ENCODE measurements at regions of chr11 and their contacts with region 1.

Region 1: DNA sequence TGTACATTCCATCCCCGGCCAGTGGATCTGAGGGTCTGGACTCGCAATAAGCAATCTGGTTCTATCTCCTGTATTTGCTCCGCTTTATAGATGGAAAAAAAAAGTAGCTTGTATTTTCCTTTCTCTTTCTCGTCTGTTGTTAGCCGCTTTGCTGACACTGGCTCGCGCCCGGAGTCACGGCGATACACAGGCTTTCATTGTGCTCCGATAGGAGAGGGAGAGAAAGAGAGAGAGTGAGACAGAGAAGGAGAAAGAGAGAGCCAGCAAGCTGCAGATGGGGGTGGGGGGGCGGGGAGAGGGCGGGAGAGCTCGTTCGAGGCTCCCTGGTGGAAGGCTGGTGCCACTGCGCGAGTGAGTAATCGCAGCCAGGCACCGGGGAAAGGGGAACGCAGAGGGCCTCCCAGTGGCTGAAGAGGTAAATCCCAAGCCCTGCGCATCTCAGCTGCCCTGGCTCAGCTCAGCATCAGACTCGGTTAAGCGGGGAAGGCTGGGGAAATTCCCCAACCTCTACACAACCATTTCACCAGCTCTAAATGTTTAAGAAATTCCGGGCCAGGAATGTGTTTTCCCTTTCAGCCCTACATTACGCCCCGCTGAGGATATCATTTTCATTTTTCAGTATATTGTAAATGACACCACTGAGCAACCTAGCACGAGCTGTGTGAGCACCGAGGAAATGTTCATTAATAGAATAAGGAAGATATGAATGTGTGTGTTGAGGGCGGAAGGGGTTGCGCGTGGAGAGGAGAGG is at the start of gene MAML2:
- DNase-seq: peak; percentile 93
- H3K4me3 Mint-ChIP-seq: peak within 1 kb of the TSS; percentile 97
- H3K27ac Mint-ChIP-seq: peak within 1 kb of the TSS; percentile 88
- H3K4me1 Mint-ChIP-seq: peaks cover 28% of the 10 kb centered on the region
- H3K27me3 Mint-ChIP-seq: no peaks in the 10 kb centered on the region
- total RNA-seq, gene MAML2: 19.2 to 19.3 TPM

Region 2: GRCh38 chr11:95802806-95803205 is 540.3 kb before region 1 on chr11:
- CTCF ChIA-PET with region 1: no interaction called
- POLR2A ChIA-PET with region 1: no interaction called
- DNase-seq: no peak
- H3K4me3 Mint-ChIP-seq: no peak overlapping the region
- H3K27ac Mint-ChIP-seq: no peak overlapping the region
- H3K4me1 Mint-ChIP-seq: peaks cover 5% of the 10 kb centered on the region
- H3K27me3 Mint-ChIP-seq: no peaks in the 10 kb centered on the region

Region 3: GRCh38 chr11:95835768-95836488 is 507.2 kb before region 1 on chr11:
- CTCF ChIA-PET with region 1: interaction called, 35 read pairs
- POLR2A ChIA-PET with region 1: no interaction called
- DNase-seq: peak; percentile 57
- H3K4me3 Mint-ChIP-seq: no peak overlapping the region
- H3K27ac Mint-ChIP-seq: no peak overlapping the region
- H3K4me1 Mint-ChIP-seq: no peaks in the 10 kb centered on the region
- H3K27me3 Mint-ChIP-seq: no peaks in the 10 kb centered on the region

Region 4: DNA sequence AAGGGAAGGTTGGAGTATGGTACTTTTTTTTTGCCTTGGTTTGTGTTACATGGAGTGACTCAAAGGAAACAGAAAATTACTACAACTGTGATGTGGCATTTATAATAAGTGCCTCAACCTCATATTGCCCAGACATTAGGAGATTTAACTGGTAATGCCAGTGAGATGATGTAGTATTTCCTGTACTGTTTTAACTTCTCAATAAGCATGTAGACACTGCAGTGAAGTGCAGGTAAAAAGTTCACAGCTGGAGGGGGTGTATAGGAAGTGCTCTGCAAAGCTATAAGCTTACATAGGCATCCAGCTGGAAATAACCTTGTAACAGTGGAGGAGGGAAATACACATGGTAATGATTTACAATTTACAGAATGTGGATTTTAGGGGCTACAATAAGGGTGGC is 281.0 kb before region 1 on chr11:
- CTCF ChIA-PET with region 1: interaction called, 138 read pairs
- POLR2A ChIA-PET with region 1: interaction called, 3 read pairs
- DNase-seq: peak; percentile 22
- H3K4me3 Mint-ChIP-seq: no peak overlapping the region
- H3K27ac Mint-ChIP-seq: peak overlapping the region; percentile 19
- H3K4me1 Mint-ChIP-seq: peaks cover 30% of the 10 kb centered on the region
- H3K27me3 Mint-ChIP-seq: no peaks in the 10 kb centered on the region

Region 5: DNA sequence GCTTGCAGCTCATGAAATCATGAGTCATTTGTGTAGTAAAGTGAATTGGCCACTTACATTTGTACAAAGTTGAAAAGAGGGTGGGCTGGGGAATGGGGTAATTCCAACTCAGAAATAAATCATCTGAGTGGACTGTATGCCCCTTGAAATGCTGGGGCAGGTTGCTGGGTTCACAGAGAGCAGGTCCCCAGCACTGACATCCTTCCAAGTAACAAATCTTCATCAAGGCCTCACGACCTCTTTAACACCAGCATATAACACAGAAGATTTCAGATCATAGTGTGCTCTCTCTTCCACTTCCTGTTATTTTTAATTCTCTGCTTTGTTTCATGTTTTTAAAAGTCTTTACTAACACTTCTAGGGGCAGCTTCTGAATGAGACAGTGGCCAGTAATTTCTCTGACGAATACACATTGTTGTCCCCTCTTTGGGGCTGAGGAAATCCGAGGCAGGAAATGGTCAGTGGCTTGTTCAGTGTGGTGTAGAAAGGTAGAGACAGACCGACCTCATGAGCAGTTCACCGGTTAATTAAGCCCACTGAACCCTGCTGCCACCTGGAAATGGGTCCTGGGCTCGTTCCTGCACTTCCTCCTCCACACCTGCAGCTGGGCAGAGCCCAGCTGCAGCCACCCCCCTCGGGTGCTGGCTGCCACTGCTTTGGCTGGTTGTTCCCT is 127.9 kb before region 1 on chr11:
- CTCF ChIA-PET with region 1: interaction called, 8 read pairs
- POLR2A ChIA-PET with region 1: interaction called, 12 read pairs
- DNase-seq: peak; percentile 48
- H3K4me3 Mint-ChIP-seq: peak overlapping the region; percentile 12
- H3K27ac Mint-ChIP-seq: peak overlapping the region; percentile 89
- H3K4me1 Mint-ChIP-seq: peaks cover 65% of the 10 kb centered on the region
- H3K27me3 Mint-ChIP-seq: no peaks in the 10 kb centered on the region

Region 6: DNA sequence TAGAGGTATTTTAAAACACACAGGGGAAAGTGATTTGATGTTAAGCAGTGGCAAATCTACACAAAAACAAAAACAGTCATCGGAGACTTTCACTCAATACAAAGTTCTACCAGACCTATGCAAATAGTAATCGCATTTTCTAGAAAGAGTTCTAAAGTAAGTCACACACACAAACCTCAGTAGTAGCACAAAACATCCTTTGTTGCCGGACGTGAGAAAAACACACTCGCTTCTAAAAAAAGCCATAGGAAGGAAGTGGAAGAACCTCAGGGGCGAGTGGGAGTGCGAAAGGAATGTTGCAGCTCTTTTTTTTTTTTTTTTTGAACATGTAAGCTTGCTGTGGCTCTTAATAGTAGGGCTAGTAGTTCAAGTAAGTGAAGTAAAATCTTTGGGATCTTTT is 89.0 kb before region 1 on chr11:
- CTCF ChIA-PET with region 1: interaction called, 40 read pairs
- POLR2A ChIA-PET with region 1: interaction called, 58 read pairs
- DNase-seq: peak; percentile 39
- H3K4me3 Mint-ChIP-seq: peak overlapping the region; percentile 63
- H3K27ac Mint-ChIP-seq: peak overlapping the region; percentile 77
- H3K4me1 Mint-ChIP-seq: peaks cover 71% of the 10 kb centered on the region
- H3K27me3 Mint-ChIP-seq: no peaks in the 10 kb centered on the region

Region 7: GRCh38 chr11:96306933-96307775 is 36.0 kb before region 1 on chr11:
- CTCF ChIA-PET with region 1: interaction called, 24 read pairs
- POLR2A ChIA-PET with region 1: interaction called, 4 read pairs
- DNase-seq: no peak
- H3K4me3 Mint-ChIP-seq: no peak overlapping the region
- H3K27ac Mint-ChIP-seq: no peak overlapping the region
- H3K4me1 Mint-ChIP-seq: peaks cover 34% of the 10 kb centered on the region
- H3K27me3 Mint-ChIP-seq: no peaks in the 10 kb centered on the region

Region 8: DNA sequence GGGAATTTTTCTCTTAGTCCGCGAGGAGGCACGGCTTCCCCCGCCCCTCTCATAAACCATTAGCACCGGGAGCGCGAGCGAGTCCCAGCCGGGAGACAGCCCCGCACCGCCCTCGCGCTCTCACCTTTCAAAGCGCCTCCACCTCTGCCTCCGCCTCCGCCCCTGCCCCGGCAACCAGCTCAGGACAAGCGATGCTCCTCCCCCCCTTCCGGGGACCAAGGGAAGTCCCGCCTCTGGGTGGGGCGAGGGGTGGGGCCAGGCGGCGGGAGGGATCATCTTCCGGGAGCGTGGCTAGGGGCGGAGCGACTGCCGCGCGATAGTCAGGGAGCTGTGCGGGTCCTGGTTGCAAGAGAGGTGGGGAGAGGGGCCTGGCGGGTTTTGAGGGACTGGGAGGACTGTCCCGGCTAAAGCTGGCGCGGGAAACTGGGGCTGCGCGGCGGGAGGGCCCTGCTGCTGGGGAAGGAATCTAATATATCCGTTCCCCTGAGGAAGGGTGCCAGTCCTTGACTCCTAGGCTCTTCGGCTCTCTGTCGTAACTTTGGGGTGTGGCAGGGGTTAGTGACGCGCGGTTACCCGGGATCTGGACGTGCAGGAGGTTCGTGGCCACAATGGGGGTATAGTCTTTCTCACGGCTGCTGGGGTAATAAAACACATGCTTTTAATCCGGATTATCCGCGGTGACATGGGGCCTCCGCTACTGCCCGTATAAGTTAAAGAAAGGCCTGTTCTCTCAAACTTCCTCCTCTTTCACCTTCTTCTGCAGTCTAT is 46.8 kb after region 1 on chr11 and contains the starts of genes CCDC82 and JRKL:
- CTCF ChIA-PET with region 1: interaction called, 83 read pairs
- POLR2A ChIA-PET with region 1: interaction called, 51 read pairs
- DNase-seq: peak; percentile 98
- H3K4me3 Mint-ChIP-seq: peak within 1 kb of the TSS; percentile 85
- H3K27ac Mint-ChIP-seq: peak within 1 kb of the TSS; percentile 81
- H3K4me1 Mint-ChIP-seq: peaks cover 55% of the 10 kb centered on the region
- H3K27me3 Mint-ChIP-seq: no peaks in the 10 kb centered on the region
- total RNA-seq, gene CCDC82: 31.5 to 32.9 TPM
- total RNA-seq, gene JRKL: 11.9 to 12.0 TPM

Measured in activated CD4-positive, alpha-beta memory T cell treated with anti-CD3 and anti-CD28 coated beads, Interleukin-2, amount 10 ng/mL, durations not matched to agents 7 days and 5 days (primary cell).